ENCODE measurements at regions of chr11 and their contacts with region 1.

Region 1: DNA sequence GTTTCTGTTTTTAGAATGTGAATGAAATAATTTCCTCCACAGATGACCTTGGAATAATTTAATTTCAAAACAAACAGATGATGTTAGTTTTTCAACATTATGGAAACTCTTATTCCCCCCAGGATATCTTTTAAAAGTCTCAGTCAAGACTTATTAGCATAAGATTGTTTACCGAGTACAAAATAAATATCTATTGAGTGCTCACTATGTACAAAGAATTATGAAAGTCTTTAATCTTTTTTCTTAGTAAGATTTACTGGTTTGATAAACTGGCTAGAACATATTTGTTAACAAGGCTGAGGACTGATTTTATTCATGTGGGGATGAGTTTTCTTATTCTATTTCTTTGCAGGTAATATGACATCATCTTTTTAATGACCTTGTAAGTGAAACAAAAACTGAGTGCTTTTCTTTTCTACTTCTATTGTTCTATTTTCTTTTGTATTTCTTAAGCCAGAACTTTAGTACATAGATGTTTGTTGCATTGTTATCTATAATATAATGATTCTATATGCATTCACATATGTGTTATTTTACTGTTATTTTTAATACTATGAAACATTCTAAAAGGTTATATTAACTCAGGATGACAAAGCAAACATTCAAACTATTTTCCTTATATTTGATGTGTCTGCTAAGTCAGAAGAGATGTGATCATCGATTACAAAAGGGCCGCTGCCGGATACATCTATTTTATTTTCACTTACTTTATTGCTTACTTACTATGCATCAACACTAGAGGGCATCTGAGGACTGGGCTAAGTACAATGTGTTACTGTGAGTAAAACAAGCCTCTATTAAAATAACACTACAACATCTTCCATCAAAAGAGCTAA is 111.0 kb upstream of the ARHGAP42 start:
- DNase-seq: peak; percentile 6 to 67
- H3K4me3 ChIP-seq: no peak overlapping the region
- H3K27ac ChIP-seq: no peak overlapping the region
- H3K4me1 ChIP-seq: peaks cover 6% of the 10 kb centered on the region
- H3K27me3 ChIP-seq: no peaks in the 10 kb centered on the region
- CTCF ChIP-seq: peak; percentile 97

Region 2: GRCh38 chr11:100328658-100329315 is 247.3 kb before region 1 on chr11:
- CTCF ChIA-PET with region 1: no interaction called
- POLR2A ChIA-PET with region 1: no interaction called
- intact Hi-C with region 1: loop called (anchors 5 kb)
- DNase-seq: peak in 1 of 2 experiments; percentile 54
- H3K4me3 ChIP-seq: no peak overlapping the region
- H3K27ac ChIP-seq: no peak overlapping the region
- H3K4me1 ChIP-seq: no peaks in the 10 kb centered on the region
- H3K27me3 ChIP-seq: no peaks in the 10 kb centered on the region
- CTCF ChIP-seq: no peak

Region 3: DNA sequence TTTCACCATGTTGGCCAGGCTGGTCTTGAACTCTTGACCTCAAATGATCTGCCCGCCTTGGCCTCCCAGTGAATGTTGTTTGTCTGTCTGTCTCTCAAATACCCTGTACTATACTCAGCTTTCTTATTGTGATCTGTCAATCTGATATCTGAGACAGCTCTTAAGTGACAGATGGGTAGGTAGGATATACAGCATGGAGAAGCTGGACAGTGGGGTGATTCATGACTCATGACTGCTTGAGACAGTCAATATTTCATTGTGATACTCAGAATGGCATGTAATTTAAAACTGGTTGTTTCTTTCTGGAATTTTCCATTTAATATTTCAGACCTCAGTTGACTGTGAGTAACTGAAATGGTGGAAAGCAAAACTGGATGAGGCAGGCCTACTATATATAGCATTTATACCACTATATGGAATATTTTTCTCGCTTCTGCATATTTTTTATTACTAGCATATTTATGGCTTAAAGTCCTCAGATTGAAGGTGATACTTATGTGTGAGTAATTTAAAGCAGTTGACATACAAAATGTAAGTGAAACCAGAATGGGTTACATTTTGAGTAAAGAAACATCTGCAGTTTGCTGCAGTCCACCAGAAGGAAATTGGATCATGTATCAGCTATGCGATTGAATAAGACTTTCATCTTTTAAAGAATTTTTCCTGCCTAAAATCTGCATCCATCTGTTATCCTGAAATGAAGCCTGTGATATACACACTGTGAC is 133.3 kb after region 1 on chr11:
- CTCF ChIA-PET with region 1: no interaction called
- POLR2A ChIA-PET with region 1: no interaction called
- intact Hi-C with region 1: no loop called
- DNase-seq: peak; percentile 7 to 69
- H3K4me3 ChIP-seq: no peak overlapping the region
- H3K27ac ChIP-seq: peak overlapping the region; percentile 46
- H3K4me1 ChIP-seq: peaks cover 14% of the 10 kb centered on the region
- H3K27me3 ChIP-seq: no peaks in the 10 kb centered on the region
- CTCF ChIP-seq: no peak

Region 4: DNA sequence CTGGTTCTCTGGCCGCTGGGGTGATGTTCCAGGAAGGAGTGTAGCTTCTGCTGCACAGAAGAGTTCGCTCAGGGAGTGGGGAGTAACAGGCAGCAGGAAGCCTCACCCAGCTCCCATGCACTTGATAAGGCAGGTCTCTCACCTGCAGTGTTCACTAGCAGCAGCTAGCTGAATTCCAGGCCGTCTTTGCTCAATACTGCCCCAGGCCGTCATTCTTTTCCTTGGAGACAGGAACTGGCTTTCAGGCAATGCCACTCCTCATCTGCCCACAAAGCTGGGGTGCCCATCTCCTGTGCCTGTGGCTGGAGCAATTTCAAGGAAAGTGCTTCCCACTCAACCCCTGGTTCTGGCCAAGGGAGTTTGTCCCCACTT is 177.1 kb after region 1 on chr11:
- CTCF ChIA-PET with region 1: no interaction called
- POLR2A ChIA-PET with region 1: interaction called, 4 read pairs
- intact Hi-C with region 1: loop called (anchors 2 kb)
- DNase-seq: peak; percentile 84 to 98
- H3K4me3 ChIP-seq: no peak overlapping the region; the same call in 1 of the 2 replicates
- H3K27ac ChIP-seq: peak overlapping the region; percentile 76
- H3K4me1 ChIP-seq: peaks cover 33% of the 10 kb centered on the region
- H3K27me3 ChIP-seq: no peaks in the 10 kb centered on the region
- CTCF ChIP-seq: peak; percentile 13; the same call in 1 of the 2 replicates

Region 5: DNA sequence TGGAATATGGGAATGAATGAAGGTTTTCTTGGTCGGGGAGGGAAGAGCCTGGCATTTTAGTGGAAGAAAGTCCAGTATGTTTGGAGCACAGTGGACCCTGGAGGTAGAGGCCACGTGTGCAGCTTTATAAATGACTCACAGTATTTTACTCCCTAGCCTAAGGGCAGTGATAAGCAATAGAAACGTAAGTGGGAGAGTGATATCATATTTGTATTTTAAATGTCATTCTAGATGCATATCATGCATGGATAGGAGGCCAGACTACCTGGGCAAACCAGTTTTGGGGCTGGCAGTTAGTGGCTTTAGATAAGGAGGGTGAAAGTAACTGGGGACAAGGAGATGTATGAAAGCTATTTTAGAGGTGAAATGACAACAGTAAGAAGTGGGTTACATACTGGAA is 285.1 kb after region 1 on chr11:
- CTCF ChIA-PET with region 1: no interaction called
- POLR2A ChIA-PET with region 1: no interaction called
- intact Hi-C with region 1: loop called (anchors 1 kb)
- DNase-seq: peak; percentile 68 to 97
- H3K4me3 ChIP-seq: no peak overlapping the region
- H3K27ac ChIP-seq: peak overlapping the region; percentile 62
- H3K4me1 ChIP-seq: peaks cover 34% of the 10 kb centered on the region
- H3K27me3 ChIP-seq: no peaks in the 10 kb centered on the region
- CTCF ChIP-seq: no peak

Region 6: GRCh38 chr11:101848262-101848661 is 1272.2 kb after region 1 on chr11:
- CTCF ChIA-PET with region 1: no interaction called
- POLR2A ChIA-PET with region 1: no interaction called
- intact Hi-C with region 1: loop called (anchors 5 kb)
- DNase-seq: no peak
- H3K4me3 ChIP-seq: no peak overlapping the region
- H3K27ac ChIP-seq: no peak overlapping the region
- H3K4me1 ChIP-seq: no peaks in the 10 kb centered on the region; the same call in 1 of the 2 replicates
- H3K27me3 ChIP-seq: no peaks in the 10 kb centered on the region
- CTCF ChIP-seq: peak; percentile 87

Measured in PC-9 (cell line).